ENCODE measurements at regions of chr5 and their contacts with region 1.

Region 1: DNA sequence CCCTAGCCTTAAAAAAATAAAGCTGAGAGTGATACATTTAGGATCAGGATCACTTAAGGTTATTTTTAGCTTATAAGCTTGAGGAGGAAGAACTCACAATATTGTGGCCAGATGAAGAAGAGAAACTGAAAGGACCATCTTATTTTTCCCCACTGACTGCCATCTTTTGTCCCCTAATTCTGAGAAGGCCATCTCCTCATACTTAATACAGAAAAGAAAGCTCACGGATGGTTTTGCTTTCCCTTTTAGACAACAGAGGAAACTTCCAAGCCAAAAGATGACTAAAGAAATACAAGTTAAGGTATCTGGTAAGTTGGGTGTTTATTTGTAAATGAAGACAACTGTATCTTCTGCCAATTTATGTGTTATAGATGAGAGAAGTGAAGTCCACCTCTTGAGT is 36.4 kb downstream of the ERAP1 start:
- DNase-seq: no peak
- ATAC-seq: no peak
- H3K4me3 ChIP-seq: no peak overlapping the region
- H3K4me3 Mint-ChIP-seq: no peak overlapping the region
- H3K27ac ChIP-seq: peak overlapping the region; percentile 48
- H3K27ac Mint-ChIP-seq: peak overlapping the region; percentile 76 to 85
- H3K4me1 ChIP-seq: no peaks in the 10 kb centered on the region
- H3K4me1 Mint-ChIP-seq: peaks cover 20 to 38% (median 25%) of the 10 kb centered on the region in 3 donors
- H3K27me3 ChIP-seq: no peaks in the 10 kb centered on the region
- H3K27me3 Mint-ChIP-seq: no peaks in the 10 kb centered on the region

Region 2: GRCh38 chr5:96844476-96844990 is 73.1 kb after region 1 on chr5:
- CTCF ChIA-PET with region 1: interaction called in 1 of 2 experiments, 10 read pairs
- POLR2A ChIA-PET with region 1: no interaction called
- DNase-seq: no peak
- ATAC-seq: no peak
- H3K4me3 ChIP-seq: no peak overlapping the region
- H3K4me3 Mint-ChIP-seq: no peak overlapping the region
- H3K27ac ChIP-seq: no peak overlapping the region
- H3K27ac Mint-ChIP-seq: no peak overlapping the region
- H3K4me1 ChIP-seq: no peaks in the 10 kb centered on the region
- H3K4me1 Mint-ChIP-seq: peaks cover 8 to 13% (median 12%) of the 10 kb centered on the region in 3 donors
- H3K27me3 ChIP-seq: no peaks in the 10 kb centered on the region
- H3K27me3 Mint-ChIP-seq: no peaks in the 10 kb centered on the region